Ascending aorta (tissue), 2 donors: ENCODE measurements at regions of chr3 and their contacts with region 1.

Region 1: DNA sequence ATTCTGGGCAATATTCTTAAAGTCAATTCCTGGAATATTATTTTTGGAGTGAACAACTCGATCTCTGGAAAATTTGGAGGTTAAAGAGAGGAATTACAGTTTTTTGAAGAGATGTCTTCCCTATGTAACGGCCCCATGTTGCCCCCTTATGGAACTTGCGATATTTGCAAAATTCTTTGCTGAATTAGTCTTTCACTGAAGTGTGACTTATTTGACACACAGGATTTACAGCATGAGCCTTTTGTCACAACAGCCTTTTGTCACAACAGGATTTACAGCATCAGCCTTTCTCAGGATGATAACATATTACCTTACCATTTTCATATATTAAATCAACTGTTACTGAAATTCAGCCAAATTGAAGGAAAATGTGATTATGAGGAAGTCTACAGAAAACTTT is 37.8 kb upstream of the SPTSSB start:
- DNase-seq: no peak
- H3K4me3 ChIP-seq: no peak overlapping the region
- H3K27ac ChIP-seq: no peak overlapping the region
- H3K4me1 ChIP-seq: peaks cover 0 to 8% of the 10 kb centered on the region in 2 donors
- H3K27me3 ChIP-seq: no peaks in the 10 kb centered on the region
- CTCF ChIP-seq: peak; percentile 14 to 50 (median 34)

Region 2: GRCh38 chr3:160801386-160802118 is 607.5 kb before region 1 on chr3:
- intact Hi-C with region 1: loop called (anchors 5 kb)
- DNase-seq: peak; percentile 25 to 77
- H3K4me3 ChIP-seq: peak overlapping the region in 1 of 2 donors; percentile 14
- H3K27ac ChIP-seq: peak overlapping the region; percentile 73 to 76
- H3K4me1 ChIP-seq: peaks cover 0 to 8% of the 10 kb centered on the region in 2 donors
- H3K27me3 ChIP-seq: no peaks in the 10 kb centered on the region
- CTCF ChIP-seq: no peak

Region 3: GRCh38 chr3:161104561-161105551 is 304.2 kb before region 1 on chr3 and contains the start of gene B3GALNT1:
- intact Hi-C with region 1: loop called (anchors 10 kb)
- DNase-seq: peak in 1 of 2 donors; percentile 65
- H3K4me3 ChIP-seq: peak within 1 kb of the TSS; percentile 64 to 71
- H3K27ac ChIP-seq: peak within 1 kb of the TSS; percentile 70 to 78
- H3K4me1 ChIP-seq: peaks cover 0 to 8% of the 10 kb centered on the region in 2 donors
- H3K27me3 ChIP-seq: no peaks in the 10 kb centered on the region
- CTCF ChIP-seq: peak in 1 of 3 experiments; percentile 4
- total RNA-seq, gene B3GALNT1: 55.6 TPM

Region 4: DNA sequence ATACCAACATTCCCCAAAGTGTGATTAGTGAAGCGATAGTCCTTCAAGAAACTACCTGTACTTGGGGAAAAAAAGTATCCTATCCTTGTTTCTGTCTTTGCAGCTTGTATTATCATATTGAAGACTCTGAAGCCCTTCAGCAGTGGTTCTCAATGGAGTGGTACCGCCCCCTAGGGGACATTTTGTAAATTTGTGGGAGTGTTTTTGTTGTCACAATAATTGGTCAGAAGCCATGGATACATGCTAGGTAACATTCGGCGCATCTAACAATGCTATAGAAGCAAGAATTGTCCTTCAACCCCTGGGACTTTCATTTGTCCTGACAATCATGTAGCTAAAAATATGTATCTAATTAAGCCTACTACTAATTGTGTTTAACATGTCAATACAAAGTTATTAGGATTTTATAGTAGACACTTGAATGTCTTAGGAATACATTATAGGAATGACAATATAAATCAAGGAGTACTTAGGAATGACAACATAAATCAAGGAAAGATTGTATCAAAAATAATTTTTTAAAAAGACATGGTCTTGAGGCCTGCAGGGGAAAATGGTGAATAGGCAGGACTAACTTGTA is 134.3 kb before region 1 on chr3:
- intact Hi-C with region 1: loop called (anchors 5 kb)
- DNase-seq: no peak
- H3K4me3 ChIP-seq: no peak overlapping the region
- H3K27ac ChIP-seq: no peak overlapping the region
- H3K4me1 ChIP-seq: no peaks in the 10 kb centered on the region
- H3K27me3 ChIP-seq: no peaks in the 10 kb centered on the region
- CTCF ChIP-seq: peak in 2 of 3 experiments; percentile 35 to 44

Region 5: DNA sequence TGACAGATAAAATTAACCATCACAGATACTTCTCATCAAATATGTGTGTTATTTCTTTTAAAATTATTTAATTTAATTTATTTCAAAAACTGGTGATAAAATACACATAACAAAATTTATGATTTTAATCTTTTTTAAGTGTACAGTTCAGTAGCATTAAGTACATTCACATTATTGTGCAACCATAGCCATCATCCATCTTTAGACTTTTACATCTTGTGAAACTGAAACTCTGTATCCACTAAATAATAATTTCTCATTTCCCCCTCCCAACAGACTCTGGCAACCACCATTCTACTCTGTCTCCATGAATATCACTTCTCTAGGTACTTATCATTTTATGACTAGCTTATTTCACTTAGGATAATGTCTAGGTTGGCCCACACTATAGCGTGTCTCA is 129.9 kb after region 1 on chr3:
- intact Hi-C with region 1: no loop called
- DNase-seq: no peak
- H3K4me3 ChIP-seq: no peak overlapping the region
- H3K27ac ChIP-seq: no peak overlapping the region
- H3K4me1 ChIP-seq: no peaks in the 10 kb centered on the region
- H3K27me3 ChIP-seq: no peaks in the 10 kb centered on the region
- CTCF ChIP-seq: no peak